Activated T-helper 1 cell treated with anti-CD3 and anti-CD28 coated beads, Interleukin-12 subunit alpha, Interleukin-12 subunit beta, Interleukin-2, Interleukin-4 antibody, amounts not matched to agents 30 ng/mL and 10 ng/mL and 1 ng/mL, durations not matched to agents 14 hours and 24 hours and 36 hours (primary cell): ENCODE measurements at regions of chr2 and their contacts with region 1.

Region 1: DNA sequence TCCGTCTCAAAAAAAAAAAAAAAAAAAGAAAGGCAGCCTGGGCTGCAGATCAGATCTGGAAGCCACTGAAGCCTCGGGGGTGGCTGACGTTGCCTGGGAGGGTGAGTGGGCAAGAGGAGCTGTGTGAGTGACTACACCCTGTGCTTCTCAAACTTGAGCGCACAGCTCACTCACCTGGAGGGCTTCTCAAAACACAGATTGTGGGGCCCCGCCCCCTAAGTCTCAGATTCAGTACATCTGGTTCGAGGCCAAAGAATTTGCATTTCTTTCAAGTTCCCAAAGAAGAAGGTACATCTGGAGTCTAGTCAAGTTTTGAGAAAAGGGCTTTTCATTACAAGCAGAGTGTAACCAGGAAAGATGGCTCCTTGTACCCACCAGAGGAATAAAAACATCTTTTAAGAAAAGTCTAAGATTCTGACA is 97.7 kb upstream of the CAB39 start:
- DNase-seq: peak; percentile 26
- H3K4me3 Mint-ChIP-seq: peak overlapping the region; percentile 26
- H3K27ac Mint-ChIP-seq: peak overlapping the region; percentile 55
- H3K4me1 Mint-ChIP-seq: peaks cover 54% of the 10 kb centered on the region
- H3K27me3 Mint-ChIP-seq: no peaks in the 10 kb centered on the region

Region 2: GRCh38 chr2:230160112-230160660 is 454.7 kb before region 1 on chr2:
- intact Hi-C with region 1: loop called (anchors 1 kb)
- DNase-seq: peak; percentile 33
- H3K4me3 Mint-ChIP-seq: no peak overlapping the region
- H3K27ac Mint-ChIP-seq: no peak overlapping the region
- H3K4me1 Mint-ChIP-seq: peaks cover 13% of the 10 kb centered on the region
- H3K27me3 Mint-ChIP-seq: peaks cover 2% of the 10 kb centered on the region

Region 3: DNA sequence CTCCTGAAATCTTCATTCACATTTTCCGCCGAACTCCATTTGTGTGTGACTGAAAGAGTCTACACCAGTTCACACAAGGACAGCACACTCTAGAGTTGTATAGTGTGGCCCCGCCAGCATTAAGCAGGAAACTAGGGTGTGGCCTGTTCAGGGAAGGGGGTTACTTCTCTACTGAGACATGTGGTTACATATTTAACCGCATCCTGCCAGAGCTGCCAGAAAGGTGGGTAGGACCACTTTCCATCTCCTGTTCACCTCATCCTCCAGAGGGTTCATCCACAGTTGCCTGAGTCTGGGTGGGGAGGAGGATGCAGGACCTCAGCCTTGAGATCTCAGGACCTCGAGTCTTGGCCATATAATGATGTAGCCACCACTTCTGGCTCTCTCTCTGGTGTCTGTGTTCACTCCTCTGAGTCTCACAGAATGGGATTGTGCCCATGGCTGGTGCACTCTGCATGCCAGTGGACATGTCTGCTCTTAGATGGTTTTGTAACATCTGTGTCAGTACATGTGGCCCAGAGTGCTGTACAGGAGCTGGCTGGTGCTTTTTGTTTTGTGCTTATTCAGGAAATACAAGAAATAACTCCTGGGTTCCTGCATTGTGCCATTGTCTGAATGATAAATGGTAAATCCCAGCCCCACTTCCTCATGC is 295.6 kb before region 1 on chr2:
- intact Hi-C with region 1: loop called (anchors 2 kb)
- DNase-seq: peak; percentile 76
- H3K4me3 Mint-ChIP-seq: peak overlapping the region; percentile 45
- H3K27ac Mint-ChIP-seq: peak overlapping the region; percentile 89
- H3K4me1 Mint-ChIP-seq: peaks cover 76% of the 10 kb centered on the region
- H3K27me3 Mint-ChIP-seq: no peaks in the 10 kb centered on the region

Region 4: DNA sequence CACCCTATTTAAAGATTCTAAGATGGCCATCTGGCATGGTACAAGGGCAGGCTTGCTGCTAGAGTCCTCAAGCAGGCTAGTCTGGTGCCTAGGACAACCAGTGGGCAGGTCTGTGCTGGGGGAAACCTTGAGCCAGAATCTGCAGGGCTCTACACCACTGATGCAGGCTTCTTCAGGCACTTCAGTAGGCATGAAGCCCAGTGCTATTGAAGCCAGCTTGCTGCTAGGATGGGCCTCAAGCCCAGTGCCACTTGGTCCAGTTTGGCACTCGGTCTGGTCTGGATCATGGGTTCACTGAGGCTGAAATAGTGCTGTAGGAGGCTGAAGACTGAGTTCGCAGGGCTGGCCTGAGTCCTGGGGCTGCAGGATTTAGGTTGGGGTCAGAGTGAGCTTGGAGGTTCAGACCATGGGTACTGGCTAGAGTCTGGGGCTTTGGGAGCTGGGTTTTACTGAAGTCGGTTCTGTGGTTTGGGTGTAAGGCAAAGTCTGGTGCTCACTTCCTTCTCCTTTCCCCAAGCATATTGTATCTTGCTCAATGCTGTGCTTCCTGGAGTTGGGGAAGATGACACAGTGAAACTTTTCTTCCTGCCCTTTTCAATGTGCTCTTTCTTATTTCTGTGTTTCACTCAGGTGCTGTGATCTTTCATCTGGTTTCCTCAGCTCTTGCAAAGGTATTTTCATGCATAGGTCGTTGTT is 157.7 kb before region 1 on chr2:
- intact Hi-C with region 1: no loop called
- DNase-seq: no peak
- H3K4me3 Mint-ChIP-seq: peak overlapping the region; percentile 31
- H3K27ac Mint-ChIP-seq: peak overlapping the region; percentile 67
- H3K4me1 Mint-ChIP-seq: peaks cover 77% of the 10 kb centered on the region
- H3K27me3 Mint-ChIP-seq: no peaks in the 10 kb centered on the region

Region 5: GRCh38 chr2:230541934-230542380 is 73.0 kb before region 1 on chr2:
- intact Hi-C with region 1: loop called (anchors 1 kb)
- DNase-seq: no peak
- H3K4me3 Mint-ChIP-seq: peak overlapping the region; percentile 48
- H3K27ac Mint-ChIP-seq: peak overlapping the region; percentile 85
- H3K4me1 Mint-ChIP-seq: peaks cover 61% of the 10 kb centered on the region
- H3K27me3 Mint-ChIP-seq: no peaks in the 10 kb centered on the region

Region 6: GRCh38 chr2:230712443-230713330 is 97.8 kb after region 1 on chr2 and contains the start of gene CAB39:
- intact Hi-C with region 1: loop called (anchors 2 kb)
- DNase-seq: peak; percentile 89
- H3K4me3 Mint-ChIP-seq: peak within 1 kb of the TSS; percentile 99
- H3K27ac Mint-ChIP-seq: peak within 1 kb of the TSS; percentile 98
- H3K4me1 Mint-ChIP-seq: peaks cover 44% of the 10 kb centered on the region
- H3K27me3 Mint-ChIP-seq: no peaks in the 10 kb centered on the region
- total RNA-seq, gene CAB39: 168 and 170 TPM in 2 replicates